GM10248 (cell line): ENCODE measurements at regions of chr1 and their contacts with region 1.

Region 1: GRCh38 chr1:89550995-89551394 is 26.4 kb downstream of the LRRC8B start:
- DNase-seq: no peak
- CTCF ChIP-seq: no peak

Region 2: DNA sequence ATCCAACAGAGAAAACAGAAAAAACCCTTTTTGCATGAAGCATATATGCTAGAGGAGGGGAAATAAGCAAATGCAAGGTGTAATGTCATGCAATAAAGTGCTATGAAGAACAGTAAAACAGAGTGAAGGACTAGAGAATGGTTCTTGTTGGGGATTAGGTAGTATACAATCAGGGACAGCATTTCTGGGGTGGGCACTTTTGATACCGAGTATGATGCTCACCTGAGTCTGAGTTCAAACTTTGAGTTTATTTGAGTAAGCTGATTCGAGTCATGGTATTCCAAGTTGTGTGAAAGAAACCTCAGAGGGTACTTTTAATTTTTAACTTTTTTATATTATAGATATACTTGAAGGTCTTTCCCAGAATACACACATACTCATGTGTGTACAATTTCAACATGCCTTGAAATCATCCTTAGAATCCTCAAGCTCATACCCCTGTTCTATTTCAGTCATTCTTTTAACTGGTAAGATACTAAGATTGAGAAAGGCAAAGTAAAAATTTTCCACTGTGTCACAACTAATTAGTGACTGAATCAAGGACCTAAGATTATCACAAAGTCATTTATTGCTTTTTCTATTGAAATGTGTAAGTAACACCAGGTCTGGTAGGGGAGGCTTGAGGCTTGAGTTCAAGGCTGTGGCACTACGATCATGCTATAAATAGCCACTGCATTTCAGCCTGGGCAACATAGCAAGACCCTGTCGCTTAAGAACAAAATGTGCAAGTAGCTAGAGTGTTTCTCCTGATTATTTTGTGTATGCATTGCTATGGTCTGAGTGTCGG is 14.2 kb before region 1 on chr1:
- CTCF ChIA-PET with region 1: interaction called, 10 read pairs
- POLR2A ChIA-PET with region 1: no interaction called
- DNase-seq: no peak
- CTCF ChIP-seq: no peak

Region 3: DNA sequence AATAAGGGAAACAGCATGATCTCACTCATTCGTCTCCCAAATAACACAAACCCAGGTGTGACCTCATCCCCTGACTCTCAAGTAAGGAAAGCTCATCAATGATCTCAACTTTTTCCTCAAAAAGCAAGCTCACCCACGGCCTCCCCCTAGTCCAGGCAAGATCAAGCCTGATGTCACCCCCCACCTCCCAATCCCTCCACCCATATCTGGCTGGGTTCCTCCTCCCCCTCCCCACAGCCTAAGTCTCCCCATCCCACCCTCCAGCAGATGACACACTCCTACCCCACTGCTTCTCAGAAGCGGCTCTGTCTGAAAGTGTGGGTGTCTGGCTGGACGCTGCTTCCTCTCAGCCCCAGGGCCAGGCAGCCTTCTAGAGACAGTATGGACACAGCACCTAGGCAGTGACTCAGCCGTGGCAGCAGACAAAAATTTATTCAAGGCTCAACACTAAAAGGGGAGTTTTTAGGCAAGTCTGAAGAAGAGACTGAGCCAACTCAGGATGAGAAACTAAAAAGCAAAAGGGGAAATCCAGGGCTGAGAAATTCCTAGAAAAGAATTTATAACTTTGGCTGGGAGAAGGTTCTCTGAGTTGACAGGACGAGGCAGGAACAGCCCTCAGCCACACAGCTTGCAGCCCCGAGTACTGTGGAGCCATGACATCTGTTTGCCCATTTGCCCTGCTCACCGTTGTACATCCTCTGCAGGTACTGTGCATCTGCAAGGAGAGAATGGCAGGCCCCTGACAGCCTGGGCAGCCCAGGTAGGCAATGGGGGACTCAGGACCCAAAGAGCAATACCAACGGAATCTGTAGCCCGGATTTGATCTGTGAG is 188.2 kb after region 1 on chr1:
- CTCF ChIA-PET with region 1: no interaction called
- POLR2A ChIA-PET with region 1: no interaction called
- DNase-seq: peak; percentile 32
- CTCF ChIP-seq: no peak